H1 (cell line): ENCODE measurements at regions of chr22 and their contacts with region 1.

Region 1: GRCh38 chr22:45208993-45209801 is 31.5 kb downstream of the KIAA0930 start:
- DNase-seq: peak; percentile 43 to 97
- H3K4me3 ChIP-seq: no peak overlapping the region
- H3K27ac ChIP-seq: no peak overlapping the region
- H3K4me1 ChIP-seq: peaks cover 0 to 22% (median 8%) of the 10 kb centered on the region in 4 experiments; a peak in 6 of 7 replicates
- H3K27me3 ChIP-seq: no peaks in the 10 kb centered on the region
- CTCF ChIP-seq: peak; percentile 75 to 85 (median 76)
- EP300 ChIP-seq: no peak
- POLR2A ChIP-seq: no peak
- RAD21 ChIP-seq: peak; percentile 54 to 68

Region 2: DNA sequence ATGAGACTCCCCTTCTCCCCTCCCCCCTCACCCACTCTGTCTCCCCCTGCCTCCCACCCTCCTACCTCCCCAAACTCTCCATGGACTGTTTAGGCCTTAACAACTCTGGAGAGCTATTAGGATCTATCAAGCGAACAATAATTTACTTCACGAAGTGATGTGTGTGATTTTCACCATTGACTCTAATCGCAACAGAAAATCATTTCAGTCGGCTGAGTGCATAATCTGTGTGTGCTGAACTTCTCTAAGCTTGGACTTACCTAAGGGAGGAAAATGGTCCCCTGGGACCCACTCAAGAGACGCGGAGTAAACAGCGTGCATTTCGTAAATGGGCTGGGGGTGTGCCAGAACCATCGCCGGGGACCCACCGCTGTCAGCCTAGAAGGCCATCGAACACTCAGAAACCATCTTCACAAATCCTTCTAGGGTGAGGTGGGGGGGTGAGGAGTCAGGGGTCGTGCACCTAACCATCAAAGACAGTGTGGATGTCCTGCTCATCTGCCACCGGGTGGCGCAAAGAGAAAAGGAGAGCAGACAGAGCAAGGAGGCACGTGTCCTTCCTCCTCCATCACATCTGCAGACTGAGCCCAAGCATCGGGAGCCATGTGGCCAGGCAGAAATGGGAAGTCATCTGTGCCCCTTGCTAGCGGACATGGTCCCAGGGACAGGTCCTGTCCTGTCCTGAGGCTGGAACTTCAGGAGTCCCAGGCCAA is 107.5 kb before region 1 on chr22:
- CTCF ChIA-PET with region 1: interaction called, 11 read pairs
- POLR2A ChIA-PET with region 1: no interaction called
- DNase-seq: no peak
- H3K4me3 ChIP-seq: no peak overlapping the region
- H3K27ac ChIP-seq: no peak overlapping the region
- H3K4me1 ChIP-seq: no peaks in the 10 kb centered on the region
- H3K27me3 ChIP-seq: peaks cover 0 to 1% (median 0%) of the 10 kb centered on the region in 4 experiments; a peak in 1 of 7 replicates
- CTCF ChIP-seq: peak; percentile 56 to 82 (median 77)
- EP300 ChIP-seq: no peak
- POLR2A ChIP-seq: no peak
- RAD21 ChIP-seq: peak; percentile 81 to 82

Region 3: DNA sequence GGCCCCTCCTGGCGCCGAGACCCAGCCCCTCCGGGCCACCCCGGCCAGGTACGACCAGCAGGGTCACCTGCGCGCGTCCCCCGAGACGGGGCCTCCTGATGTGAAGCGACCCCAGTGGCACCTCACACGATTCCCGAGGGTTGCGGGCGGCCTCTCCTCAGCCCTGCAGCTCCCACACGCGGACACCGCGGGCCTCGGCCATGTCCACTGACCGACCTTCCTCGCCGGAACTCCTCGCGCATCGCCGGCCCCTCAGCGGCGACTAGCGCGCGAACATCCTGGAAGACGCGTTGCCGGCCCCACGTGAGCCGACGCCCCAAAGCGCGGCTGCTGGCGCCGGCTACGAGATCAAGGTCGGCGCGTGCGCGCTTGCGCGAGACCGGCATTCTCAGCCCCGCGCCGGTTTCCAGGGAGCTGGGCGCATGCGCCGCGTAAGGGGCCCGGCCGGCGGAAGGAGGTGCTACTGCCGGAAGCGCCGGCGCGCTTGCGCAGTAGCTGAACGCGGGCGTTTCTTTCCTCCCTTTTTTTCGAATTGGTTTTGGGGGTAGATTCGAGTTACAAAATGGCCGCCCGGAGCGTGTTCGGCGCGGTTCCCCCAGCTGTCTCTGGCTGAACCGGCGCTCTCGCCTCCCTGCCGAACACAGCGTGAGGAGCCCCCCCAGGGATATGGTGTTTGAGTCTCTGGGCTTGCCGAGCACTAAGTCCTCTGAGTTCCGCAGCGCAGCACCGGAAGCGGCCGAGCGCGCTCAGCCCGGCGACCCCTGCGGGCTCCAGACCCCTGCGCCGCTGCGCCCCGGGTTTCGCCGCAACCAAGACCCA is 45.5 kb before region 1 on chr22 and contains the start of gene NUP50:
- CTCF ChIA-PET with region 1: no interaction called
- POLR2A ChIA-PET with region 1: no interaction called
- DNase-seq: peak; percentile 93 to 97
- H3K4me3 ChIP-seq: peak within 1 kb of the TSS; percentile 85 to 91 (median 90)
- H3K27ac ChIP-seq: peak within 1 kb of the TSS; percentile 85
- H3K4me1 ChIP-seq: peaks cover 3 to 17% (median 10%) of the 10 kb centered on the region in 4 experiments; a peak in 6 of 7 replicates
- H3K27me3 ChIP-seq: no peaks in the 10 kb centered on the region
- CTCF ChIP-seq: no peak
- EP300 ChIP-seq: no peak
- POLR2A ChIP-seq: peak; percentile 89
- RAD21 ChIP-seq: 0 out of 4 replicates have a peak, but pooled peaks of 1 of the 2 experiments have one; percentile 3
- total RNA-seq, gene NUP50: 112 and 118 TPM in 2 replicates

Region 4: DNA sequence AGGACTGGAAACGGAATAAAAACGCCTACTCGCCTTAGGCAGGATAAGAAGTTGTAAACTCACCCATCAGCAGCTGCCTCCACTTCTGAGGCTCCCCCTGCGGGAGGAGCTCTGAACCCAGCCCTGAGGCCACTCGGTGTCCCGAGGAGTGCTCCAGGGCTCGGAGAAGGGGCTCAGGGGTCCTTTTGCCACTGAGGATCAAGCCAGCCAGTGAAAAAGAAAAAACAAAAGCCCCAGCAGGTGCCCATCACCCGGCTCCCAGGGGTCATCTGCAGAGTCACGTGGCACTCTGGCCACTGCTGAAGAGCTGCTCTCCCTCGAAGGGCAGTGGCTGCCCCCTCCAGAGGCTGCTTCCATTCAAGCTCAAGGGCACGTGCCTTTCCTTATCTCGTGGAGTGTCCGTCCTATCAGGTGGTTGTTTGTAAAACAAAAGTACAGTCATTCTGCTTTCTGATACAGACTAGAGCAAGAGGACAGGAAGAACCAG is 16.5 kb before region 1 on chr22:
- CTCF ChIA-PET with region 1: interaction called, 24 read pairs
- POLR2A ChIA-PET with region 1: interaction called, 3 read pairs
- DNase-seq: peak in 1 of 2 experiments; percentile 62
- H3K4me3 ChIP-seq: no peak overlapping the region
- H3K27ac ChIP-seq: no peak overlapping the region
- H3K4me1 ChIP-seq: peaks cover 4 to 10% (median 7%) of the 10 kb centered on the region in 4 experiments; a peak in 6 of 7 replicates
- H3K27me3 ChIP-seq: no peaks in the 10 kb centered on the region
- CTCF ChIP-seq: peak; percentile 41 to 51 (median 42)
- EP300 ChIP-seq: no peak
- POLR2A ChIP-seq: no peak
- RAD21 ChIP-seq: peak; percentile 54 to 70

Region 5: DNA sequence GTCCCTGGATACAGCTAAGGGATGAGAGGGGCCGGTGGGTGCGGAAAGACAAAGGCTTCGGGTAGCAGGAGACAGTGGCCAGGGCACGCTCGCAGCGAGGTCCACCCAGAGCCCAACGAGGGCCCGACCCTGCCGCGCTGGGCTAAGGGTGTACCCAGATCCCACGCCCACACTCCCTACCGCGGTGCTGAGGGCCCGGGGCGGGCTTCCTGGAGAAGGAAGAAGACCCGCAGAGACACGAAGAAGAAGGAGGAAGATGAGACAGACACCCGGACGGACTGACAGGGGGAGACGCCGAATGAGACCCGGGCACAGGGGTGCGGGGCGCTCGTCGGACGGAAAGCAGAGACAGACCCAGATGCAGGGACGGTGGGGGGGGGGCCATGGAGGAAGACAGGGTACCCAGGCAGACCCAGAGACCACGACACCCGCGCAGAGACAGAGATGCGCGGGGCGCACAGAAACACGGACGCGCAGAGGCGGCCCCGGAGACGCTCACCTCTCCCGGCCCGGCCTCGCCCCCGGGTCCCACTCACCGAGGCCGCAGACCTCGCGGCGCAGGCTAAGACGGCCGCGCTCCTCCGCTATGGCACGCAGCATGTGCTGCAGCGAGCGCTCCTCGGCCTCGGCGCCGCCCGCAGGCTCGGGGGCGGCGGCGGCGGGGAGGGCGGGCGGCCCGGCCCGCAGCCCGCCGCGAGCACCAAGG is 31.1 kb after region 1 on chr22:
- CTCF ChIA-PET with region 1: interaction called, 25 read pairs
- POLR2A ChIA-PET with region 1: no interaction called
- DNase-seq: peak in 1 of 2 experiments; percentile 65
- H3K4me3 ChIP-seq: peak overlapping the region; percentile 65 to 78 (median 72)
- H3K27ac ChIP-seq: no peak overlapping the region
- H3K4me1 ChIP-seq: peaks cover 3 to 19% (median 15%) of the 10 kb centered on the region in 4 experiments; a peak in 6 of 7 replicates
- H3K27me3 ChIP-seq: peaks cover 0 to 7% (median 3%) of the 10 kb centered on the region in 4 experiments; a peak in 4 of 7 replicates
- CTCF ChIP-seq: no peak
- EP300 ChIP-seq: no peak
- POLR2A ChIP-seq: no peak
- RAD21 ChIP-seq: no peak

Region 6: DNA sequence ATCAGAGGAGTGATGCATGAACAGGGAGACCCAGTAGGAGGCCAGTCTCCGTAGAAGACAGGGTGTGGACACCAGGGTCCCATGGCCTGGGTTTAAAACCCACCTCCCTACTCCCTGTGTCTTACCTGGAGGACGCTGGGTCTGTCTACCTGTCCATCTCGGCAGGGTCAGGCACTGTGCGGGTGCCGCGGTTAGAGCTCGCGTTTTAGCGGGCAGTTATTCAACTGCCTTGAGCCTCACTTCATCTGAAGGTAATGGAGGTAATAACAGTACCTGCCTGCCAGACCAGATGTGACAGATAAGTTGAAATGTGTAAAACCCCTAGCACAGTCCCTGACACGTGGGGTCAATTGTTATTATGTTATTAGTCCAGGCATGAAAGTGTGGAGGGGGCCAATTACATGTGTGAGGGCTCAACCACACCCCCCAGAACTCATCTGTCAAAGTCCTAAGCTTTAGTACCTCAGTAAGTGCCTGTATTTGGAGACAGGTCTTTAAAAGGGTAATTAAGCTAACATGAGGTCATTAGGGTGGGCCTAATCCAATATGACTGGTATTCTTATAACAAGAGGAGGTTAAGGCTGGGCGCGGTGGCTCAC is 67.4 kb after region 1 on chr22:
- CTCF ChIA-PET with region 1: no interaction called
- POLR2A ChIA-PET with region 1: no interaction called
- DNase-seq: no peak
- H3K4me3 ChIP-seq: no peak overlapping the region
- H3K27ac ChIP-seq: no peak overlapping the region
- H3K4me1 ChIP-seq: no peaks in the 10 kb centered on the region
- H3K27me3 ChIP-seq: no peaks in the 10 kb centered on the region
- CTCF ChIP-seq: no peak
- EP300 ChIP-seq: no peak
- POLR2A ChIP-seq: no peak
- RAD21 ChIP-seq: no peak